ENCODE measurements at regions of chr11 and their contacts with region 1.

Region 1: GRCh38 chr11:74011360-74012073 is 2.6 kb upstream of the UCP3 start:
- DNase-seq: no peak
- ATAC-seq: peak; percentile 21

Region 2: GRCh38 chr11:73965076-73965860 is 46.2 kb before region 1 on chr11:
- intact Hi-C with region 1: loop called (anchors 10 kb)
- DNase-seq: peak; percentile 48
- ATAC-seq: no peak

Measured in sciatic nerve (tissue), 2 donors.